ENCODE measurements at regions of chr16 and their contacts with region 1.

Region 1: DNA sequence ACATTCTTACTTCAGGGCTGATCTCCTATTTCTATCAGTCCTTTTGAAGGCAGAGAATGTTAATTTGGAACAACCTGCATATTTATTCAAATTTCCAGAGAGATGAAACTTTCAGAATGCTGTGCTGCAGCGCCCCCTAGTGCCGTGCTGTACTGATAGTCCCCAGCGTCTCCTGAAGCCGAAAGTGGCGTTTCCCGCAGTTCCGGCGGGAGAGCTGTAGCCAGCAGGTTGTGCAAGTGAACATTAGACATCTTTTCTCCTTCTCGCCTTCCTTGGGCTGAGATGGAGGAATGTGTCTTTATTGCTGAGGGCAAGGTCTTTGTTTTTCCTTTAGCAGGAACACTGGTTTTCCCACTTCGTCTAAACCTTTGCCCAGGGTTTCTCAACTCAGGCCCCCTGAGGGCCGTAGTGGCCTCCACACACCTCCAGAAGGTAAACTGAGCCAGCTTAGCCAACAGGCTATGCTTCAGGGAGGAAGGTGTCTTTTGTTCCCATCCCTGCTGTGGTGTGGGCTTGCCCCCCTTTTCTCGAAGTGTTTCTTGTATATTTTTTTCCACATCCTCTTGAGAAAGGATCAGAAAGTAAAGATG is 26.4 kb downstream of the USP10 start:
- DNase-seq: peak; percentile 36 to 93
- H3K4me3 ChIP-seq: peak overlapping the region in 1 of 4 experiments; percentile 37; a peak in 1 of 8 replicates
- H3K27ac ChIP-seq: no peak overlapping the region
- H3K4me1 ChIP-seq: peaks cover 5 to 20% (median 15%) of the 10 kb centered on the region in 4 experiments; a peak in 5 of 7 replicates
- H3K27me3 ChIP-seq: no peaks in the 10 kb centered on the region
- CTCF ChIP-seq: peak; percentile 81 to 93 (median 85)
- EP300 ChIP-seq: no peak
- POLR2A ChIP-seq: no peak
- RAD21 ChIP-seq: peak; percentile 88 to 89

Region 2: DNA sequence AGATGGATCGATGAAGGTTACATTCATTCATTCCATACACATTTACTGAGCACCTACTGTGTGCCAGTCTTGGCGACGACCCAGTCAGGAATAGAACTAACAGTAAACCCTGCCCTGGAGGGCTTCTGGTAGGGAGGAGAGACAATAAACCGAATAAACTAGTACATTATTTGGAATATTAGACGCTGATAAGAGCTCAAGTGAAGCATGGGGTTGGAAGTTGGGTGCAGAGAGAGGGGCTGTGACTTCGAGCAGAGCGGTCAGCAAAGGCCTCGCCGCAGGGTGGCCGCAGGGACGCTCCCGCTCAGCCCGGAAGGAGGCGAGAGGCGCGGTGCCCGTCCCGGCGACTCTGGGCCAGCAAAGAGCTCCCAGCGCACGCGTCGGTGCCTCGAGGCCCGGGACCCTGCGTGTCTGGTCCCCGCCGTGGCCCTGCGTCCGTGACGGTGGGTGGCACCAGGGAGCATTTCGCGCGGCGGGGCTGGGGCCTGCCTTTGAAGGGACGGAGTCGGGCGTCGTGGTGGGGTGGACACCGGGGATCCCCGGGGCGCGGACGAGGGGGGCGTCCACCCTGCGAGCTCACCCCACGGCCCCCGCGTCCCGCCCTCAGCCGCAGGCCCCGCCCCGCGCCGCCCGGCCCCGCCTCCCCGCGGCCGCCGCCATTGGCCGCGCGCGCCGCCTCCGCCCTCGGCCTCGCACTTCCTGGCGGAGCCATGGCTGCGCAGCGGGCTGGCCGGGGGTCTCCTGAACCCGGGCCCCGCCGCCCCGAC is 78.2 kb before region 1 on chr16 and contains the start of gene KLHL36:
- CTCF ChIA-PET with region 1: interaction called, 18 read pairs
- POLR2A ChIA-PET with region 1: interaction called, 3 read pairs
- DNase-seq: peak in 1 of 2 experiments; percentile 69
- H3K4me3 ChIP-seq: peak within 1 kb of the TSS; percentile 55 to 71 (median 62)
- H3K27ac ChIP-seq: no peak within 1 kb of the TSS
- H3K4me1 ChIP-seq: peaks cover 0 to 4% (median 2%) of the 10 kb centered on the region in 4 experiments; a peak in 4 of 7 replicates
- H3K27me3 ChIP-seq: peaks cover 0 to 13% (median 9%) of the 10 kb centered on the region in 4 experiments; a peak in 4 of 7 replicates
- CTCF ChIP-seq: no peak
- EP300 ChIP-seq: no peak
- POLR2A ChIP-seq: no peak
- RAD21 ChIP-seq: no peak
- total RNA-seq, gene KLHL36: 33.6 and 35.3 TPM in 2 replicates

Region 3: DNA sequence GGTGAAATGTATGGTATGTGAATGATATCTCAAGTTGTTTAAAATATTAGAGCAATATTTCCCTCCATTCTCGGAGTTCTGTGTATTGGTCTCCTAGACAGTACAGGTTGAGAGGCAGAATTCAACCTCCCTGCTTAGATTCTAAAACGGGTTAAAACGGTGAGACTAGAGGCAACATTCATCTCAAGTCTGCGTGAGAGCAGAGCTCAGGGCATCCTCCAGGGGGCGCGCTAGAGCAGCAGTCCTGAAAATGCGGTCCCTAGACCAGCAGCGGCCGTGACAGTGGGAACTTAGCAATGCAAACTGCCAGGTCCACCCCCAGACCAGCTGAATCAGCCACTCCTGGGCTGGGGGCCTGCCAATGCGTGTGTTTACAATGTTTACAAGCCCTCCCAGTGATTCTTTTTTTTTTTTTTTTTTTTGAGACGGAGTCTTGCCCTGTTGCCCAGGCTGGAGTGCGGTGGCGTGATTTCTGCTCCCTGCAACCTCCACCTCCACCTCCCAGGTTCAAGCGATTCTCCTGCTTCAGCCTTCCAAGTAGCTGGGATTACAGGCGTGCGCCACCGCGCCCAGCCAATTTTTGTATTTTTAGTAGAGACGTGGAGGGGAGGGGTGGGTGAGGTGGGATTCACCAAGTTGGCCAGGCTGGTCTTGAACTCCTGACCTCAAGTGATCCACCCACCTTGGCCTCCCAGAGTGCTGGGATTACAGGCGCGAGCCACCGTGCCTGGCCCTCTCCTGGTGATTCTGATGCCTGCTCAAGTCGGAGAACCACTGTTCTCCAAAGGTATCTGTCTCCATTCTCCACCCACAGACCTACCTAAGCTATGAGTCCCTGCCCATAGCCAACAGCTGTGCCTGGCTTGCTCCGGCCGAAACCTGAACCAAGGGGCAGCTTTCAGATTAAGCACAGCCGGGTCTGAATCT is 53.6 kb before region 1 on chr16:
- CTCF ChIA-PET with region 1: interaction called, 98 read pairs
- POLR2A ChIA-PET with region 1: interaction called, 3 read pairs
- DNase-seq: peak; percentile 57 to 96
- H3K4me3 ChIP-seq: no peak overlapping the region
- H3K27ac ChIP-seq: no peak overlapping the region
- H3K4me1 ChIP-seq: peaks cover 0 to 13% (median 6%) of the 10 kb centered on the region in 4 experiments; a peak in 5 of 7 replicates
- H3K27me3 ChIP-seq: no peaks in the 10 kb centered on the region
- CTCF ChIP-seq: peak; percentile 92 to 95 (median 95)
- EP300 ChIP-seq: no peak
- POLR2A ChIP-seq: no peak
- RAD21 ChIP-seq: peak; percentile 65 to 76

Region 4: DNA sequence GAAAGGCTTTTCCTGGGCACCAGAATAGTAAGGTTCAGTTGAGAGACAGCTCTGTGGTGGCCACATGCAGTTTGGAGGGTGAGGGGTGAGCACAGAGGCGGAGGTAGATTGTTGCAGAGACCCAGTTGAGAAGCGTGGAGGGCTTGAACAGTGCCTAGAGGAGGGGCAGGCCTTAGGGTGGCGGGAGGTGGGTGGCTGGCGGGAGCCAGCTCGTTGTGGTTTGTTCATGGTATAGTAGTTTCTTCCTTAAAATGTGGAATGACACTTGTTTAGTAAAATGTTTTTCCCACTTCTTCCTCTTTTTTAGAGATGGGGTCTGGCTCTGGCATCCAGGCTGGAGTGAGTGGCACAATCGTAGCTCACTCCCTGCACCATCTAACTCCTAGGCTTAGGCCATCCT is 12.1 kb before region 1 on chr16:
- CTCF ChIA-PET with region 1: interaction called, 71 read pairs
- POLR2A ChIA-PET with region 1: interaction called, 13 read pairs
- DNase-seq: peak in 1 of 2 experiments; percentile 50
- H3K4me3 ChIP-seq: no peak overlapping the region
- H3K27ac ChIP-seq: no peak overlapping the region
- H3K4me1 ChIP-seq: peaks cover 2 to 24% (median 19%) of the 10 kb centered on the region in 4 experiments
- H3K27me3 ChIP-seq: no peaks in the 10 kb centered on the region
- CTCF ChIP-seq: no peak
- EP300 ChIP-seq: no peak
- POLR2A ChIP-seq: no peak
- RAD21 ChIP-seq: no peak

Region 5: GRCh38 chr16:84754353-84754856 is 28.2 kb after region 1 on chr16:
- CTCF ChIA-PET with region 1: interaction called, 137 read pairs
- POLR2A ChIA-PET with region 1: no interaction called
- DNase-seq: peak; percentile 33 to 76
- H3K4me3 ChIP-seq: no peak overlapping the region
- H3K27ac ChIP-seq: no peak overlapping the region
- H3K4me1 ChIP-seq: no peaks in the 10 kb centered on the region
- H3K27me3 ChIP-seq: no peaks in the 10 kb centered on the region
- CTCF ChIP-seq: peak in 2 of 3 experiments; percentile 73 to 79; a peak in 3 of 4 replicates
- EP300 ChIP-seq: no peak
- POLR2A ChIP-seq: no peak
- RAD21 ChIP-seq: peak; percentile 79 to 82

Region 6: GRCh38 chr16:84933774-84934631 is 207.8 kb after region 1 on chr16:
- CTCF ChIA-PET with region 1: no interaction called
- POLR2A ChIA-PET with region 1: no interaction called
- DNase-seq: no peak
- H3K4me3 ChIP-seq: no peak overlapping the region
- H3K27ac ChIP-seq: no peak overlapping the region
- H3K4me1 ChIP-seq: no peaks in the 10 kb centered on the region
- H3K27me3 ChIP-seq: no peaks in the 10 kb centered on the region
- CTCF ChIP-seq: no peak
- EP300 ChIP-seq: no peak
- POLR2A ChIP-seq: no peak
- RAD21 ChIP-seq: no peak

Measured in H1 (cell line).